PC-9 (cell line): ENCODE measurements at regions of chr4 and their contacts with region 1.

Region 1: DNA sequence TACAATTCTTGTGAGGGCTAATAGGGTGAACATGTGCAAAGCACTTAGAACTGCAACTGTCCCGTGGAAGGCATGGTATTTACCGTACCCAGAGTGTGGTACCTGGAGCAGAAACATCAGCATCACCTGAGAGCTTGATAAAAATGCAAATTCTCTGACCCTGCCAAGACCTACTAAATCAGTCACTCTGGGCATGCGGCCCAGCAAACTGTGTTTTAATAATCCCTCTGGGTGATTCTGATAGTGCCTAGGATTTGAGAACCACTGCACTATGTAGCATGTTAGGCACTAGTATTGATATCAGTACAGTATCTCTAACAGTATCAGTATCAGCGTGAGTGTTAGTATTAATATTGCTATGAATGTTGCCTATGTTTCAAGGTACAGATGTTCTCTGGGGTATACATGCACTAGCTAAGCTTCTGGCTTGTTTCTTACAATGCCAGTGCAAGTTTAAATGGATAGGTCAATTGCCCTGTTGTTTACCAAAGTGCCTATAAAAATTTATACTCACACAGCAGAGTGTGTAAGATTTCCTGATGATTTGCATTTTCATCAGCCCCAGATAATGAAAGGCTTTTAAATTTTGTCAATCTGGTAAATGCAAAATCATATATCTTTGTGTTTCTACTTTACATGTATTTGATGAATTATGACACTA is 354.0 kb downstream of the HS3ST1 start:
- DNase-seq: no peak
- H3K4me3 ChIP-seq: no peak overlapping the region
- H3K27ac ChIP-seq: no peak overlapping the region
- H3K4me1 ChIP-seq: no peaks in the 10 kb centered on the region
- H3K27me3 ChIP-seq: no peaks in the 10 kb centered on the region
- CTCF ChIP-seq: no peak

Region 2: DNA sequence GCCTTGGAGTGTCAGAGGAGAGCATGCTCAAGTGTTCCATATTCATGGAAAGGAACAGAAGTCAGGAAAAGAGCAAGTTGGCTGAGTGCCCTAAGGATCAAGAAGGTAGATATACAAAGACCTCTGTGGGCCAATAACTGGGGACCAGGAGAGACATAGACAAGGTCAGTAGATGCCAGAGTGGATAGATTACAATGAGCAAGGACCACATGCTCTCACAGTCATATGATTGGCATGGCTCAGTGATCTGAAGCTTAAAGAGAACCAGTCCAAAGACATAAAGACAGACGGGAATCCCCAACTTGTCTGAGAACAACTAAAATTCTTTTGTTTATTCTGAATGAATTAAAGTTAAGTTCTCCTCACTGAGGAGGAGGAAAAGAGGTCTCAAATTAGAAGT is 64.3 kb after region 1 on chr4:
- CTCF ChIA-PET with region 1: no interaction called
- POLR2A ChIA-PET with region 1: no interaction called
- intact Hi-C with region 1: no loop called
- DNase-seq: no peak
- H3K4me3 ChIP-seq: no peak overlapping the region
- H3K27ac ChIP-seq: no peak overlapping the region
- H3K4me1 ChIP-seq: no peaks in the 10 kb centered on the region
- H3K27me3 ChIP-seq: no peaks in the 10 kb centered on the region
- CTCF ChIP-seq: no peak

Region 3: GRCh38 chr4:11165052-11165451 is 90.3 kb after region 1 on chr4:
- CTCF ChIA-PET with region 1: no interaction called
- POLR2A ChIA-PET with region 1: no interaction called
- intact Hi-C with region 1: no loop called
- DNase-seq: no peak
- H3K4me3 ChIP-seq: no peak overlapping the region
- H3K27ac ChIP-seq: no peak overlapping the region
- H3K4me1 ChIP-seq: no peaks in the 10 kb centered on the region
- H3K27me3 ChIP-seq: no peaks in the 10 kb centered on the region
- CTCF ChIP-seq: no peak

Region 4: DNA sequence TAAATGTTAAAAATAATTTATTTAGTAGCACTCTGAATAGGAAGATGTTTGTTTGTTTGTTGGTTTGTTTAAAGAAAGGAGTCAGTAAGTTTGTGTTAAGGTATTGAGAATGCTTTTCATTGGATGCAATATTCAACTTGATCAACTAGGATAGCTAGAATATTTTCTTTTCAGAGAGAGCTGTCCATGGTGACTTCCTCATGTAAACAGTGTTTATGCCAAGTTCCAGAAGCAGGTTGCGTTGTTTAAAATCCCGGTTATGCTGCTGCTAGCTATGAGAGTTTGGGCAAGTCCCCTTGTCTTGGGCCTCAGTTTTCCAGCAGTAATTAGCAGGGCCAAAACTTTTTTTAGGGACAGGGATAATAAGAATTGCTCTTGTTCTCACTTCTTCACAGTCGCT is 1230.2 kb after region 1 on chr4:
- CTCF ChIA-PET with region 1: no interaction called
- POLR2A ChIA-PET with region 1: interaction called, 13 read pairs
- intact Hi-C with region 1: no loop called
- DNase-seq: no peak
- H3K4me3 ChIP-seq: no peak overlapping the region
- H3K27ac ChIP-seq: no peak overlapping the region
- H3K4me1 ChIP-seq: no peaks in the 10 kb centered on the region
- H3K27me3 ChIP-seq: no peaks in the 10 kb centered on the region
- CTCF ChIP-seq: no peak